ENCODE measurements at regions of chr10 and their contacts with region 1.

Region 1: DNA sequence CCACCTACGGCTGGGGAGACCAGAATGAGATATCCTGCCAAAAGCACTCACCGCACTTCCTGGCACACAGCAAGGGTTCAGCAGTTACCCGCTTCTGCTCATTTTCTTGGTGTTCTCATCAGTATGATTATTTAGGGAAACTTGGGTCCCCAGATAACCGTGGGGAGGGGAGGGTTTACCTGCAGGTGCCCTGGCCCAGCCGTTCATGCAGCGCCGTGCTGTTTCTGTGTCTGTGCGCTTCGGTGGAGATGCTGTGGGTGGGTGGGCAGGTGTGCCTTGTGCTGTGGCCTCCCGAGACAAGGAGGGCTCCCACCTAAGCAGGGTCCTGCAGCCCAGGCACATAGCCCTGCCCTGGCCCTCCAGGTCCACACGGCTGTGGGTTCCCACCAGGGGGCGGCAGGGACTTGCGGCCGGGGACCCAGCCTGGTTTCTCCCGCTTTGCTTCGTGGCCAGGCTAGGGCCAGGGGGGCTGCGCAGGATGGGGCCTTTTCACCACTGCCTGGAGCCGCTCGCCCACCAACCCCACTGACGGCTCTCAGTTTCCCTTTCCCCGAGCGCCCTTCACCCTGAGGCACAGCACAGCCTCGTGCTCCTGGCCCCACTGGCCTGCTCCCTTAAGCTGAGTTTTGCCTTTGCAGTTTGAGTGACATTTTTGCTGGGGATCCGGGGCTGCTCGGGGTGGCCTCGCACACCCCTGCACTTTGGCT is 78.5 kb downstream of the LHPP start:
- DNase-seq: peak; percentile 71
- ATAC-seq: peak; percentile 66
- H3K4me3 Mint-ChIP-seq: peak overlapping the region; percentile 50
- H3K27ac Mint-ChIP-seq: peak overlapping the region; percentile 82
- H3K4me1 Mint-ChIP-seq: peaks cover 89% of the 10 kb centered on the region
- H3K27me3 Mint-ChIP-seq: no peaks in the 10 kb centered on the region
- CTCF ChIP-seq: no peak

Region 2: DNA sequence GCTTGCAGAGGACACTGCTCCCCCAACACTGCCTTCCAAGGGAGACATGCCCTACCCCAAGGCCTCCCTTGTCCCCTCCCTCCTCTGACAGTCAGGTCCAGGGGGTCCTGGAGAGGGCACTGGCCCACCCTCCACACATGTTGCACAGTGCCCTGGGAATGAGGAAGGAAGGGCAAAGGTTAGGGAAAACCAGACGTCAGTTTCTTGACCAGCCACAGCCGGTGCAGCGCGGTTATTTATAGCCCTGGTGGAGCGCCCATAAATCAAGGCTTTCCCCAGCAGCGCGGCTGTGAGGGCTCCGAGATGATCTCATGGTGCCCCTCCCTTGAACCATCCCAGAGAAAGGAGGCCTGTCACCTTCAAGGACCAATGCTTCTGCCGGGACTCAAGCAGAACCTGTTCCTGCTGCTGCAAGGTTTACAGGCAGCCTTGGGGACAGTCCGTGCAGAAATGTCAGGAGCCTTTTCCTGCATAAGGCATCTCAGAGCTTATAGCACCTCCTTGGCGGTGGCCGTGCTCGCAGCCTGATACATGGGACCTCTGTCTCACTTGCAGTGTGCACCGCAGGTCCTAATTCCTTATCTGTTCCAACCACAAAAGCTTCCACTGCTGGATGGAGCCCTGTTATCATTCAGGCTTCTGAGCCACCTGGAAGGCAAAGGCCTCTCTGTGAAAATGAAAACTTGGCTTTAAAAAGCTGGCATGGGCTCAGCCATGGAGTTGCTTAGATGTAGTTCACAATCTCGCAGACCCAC is 48.8 kb after region 1 on chr10:
- CTCF ChIA-PET with region 1: no interaction called
- POLR2A ChIA-PET with region 1: interaction called, 7 read pairs
- intact Hi-C with region 1: loop called (anchors 2 kb)
- DNase-seq: no peak
- ATAC-seq: no peak
- H3K4me3 Mint-ChIP-seq: no peak overlapping the region
- H3K27ac Mint-ChIP-seq: no peak overlapping the region
- H3K4me1 Mint-ChIP-seq: peaks cover 57% of the 10 kb centered on the region
- H3K27me3 Mint-ChIP-seq: no peaks in the 10 kb centered on the region
- CTCF ChIP-seq: no peak

Region 3: DNA sequence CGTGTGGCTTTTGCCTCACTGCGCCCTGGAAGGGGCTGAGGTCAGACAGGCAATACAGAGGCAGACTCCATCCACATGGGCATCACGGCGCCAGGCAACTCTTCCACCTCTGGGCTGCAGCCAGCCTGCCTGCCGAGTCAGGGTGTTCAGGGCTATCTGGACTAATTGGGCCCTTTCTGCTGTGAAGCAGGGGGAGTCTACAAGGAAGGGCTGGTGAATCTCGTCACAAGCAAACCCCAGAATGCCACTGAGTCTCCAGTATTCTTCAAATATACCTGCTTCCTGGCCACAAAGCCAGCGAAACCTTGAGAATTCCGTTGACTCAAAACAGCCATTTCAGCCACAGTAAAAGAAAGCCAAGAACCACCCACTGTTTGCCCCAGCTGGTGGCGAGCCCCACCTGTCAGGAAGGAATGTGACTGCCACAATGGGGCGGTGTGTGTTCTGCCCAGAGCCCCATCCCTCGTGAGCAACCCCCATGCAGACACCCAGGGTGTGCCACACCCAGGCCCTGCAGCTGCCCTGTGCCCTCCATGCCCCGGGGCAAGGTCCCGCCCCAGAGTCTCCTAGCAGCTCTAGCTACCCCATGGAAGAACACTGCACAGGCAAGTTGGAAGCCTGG is 86.8 kb after region 1 on chr10:
- CTCF ChIA-PET with region 1: interaction called, 8 read pairs
- POLR2A ChIA-PET with region 1: interaction called, 43 read pairs
- intact Hi-C with region 1: loop called (anchors 1 kb)
- DNase-seq: no peak
- ATAC-seq: peak; percentile 63
- H3K4me3 Mint-ChIP-seq: peak overlapping the region; percentile 46
- H3K27ac Mint-ChIP-seq: peak overlapping the region; percentile 95
- H3K4me1 Mint-ChIP-seq: peaks cover 99% of the 10 kb centered on the region
- H3K27me3 Mint-ChIP-seq: no peaks in the 10 kb centered on the region
- CTCF ChIP-seq: no peak

Region 4: GRCh38 chr10:124647421-124648130 is 107.5 kb after region 1 on chr10:
- CTCF ChIA-PET with region 1: interaction called, 8 read pairs
- POLR2A ChIA-PET with region 1: interaction called, 11 read pairs
- intact Hi-C with region 1: no loop called
- DNase-seq: no peak
- ATAC-seq: peak; percentile 64
- H3K4me3 Mint-ChIP-seq: peak overlapping the region; percentile 62
- H3K27ac Mint-ChIP-seq: peak overlapping the region; percentile 88
- H3K4me1 Mint-ChIP-seq: peaks cover 100% of the 10 kb centered on the region
- H3K27me3 Mint-ChIP-seq: no peaks in the 10 kb centered on the region
- CTCF ChIP-seq: no peak

Region 5: GRCh38 chr10:124732931-124733570 is 193.0 kb after region 1 on chr10:
- CTCF ChIA-PET with region 1: interaction called, 7 read pairs
- POLR2A ChIA-PET with region 1: interaction called, 10 read pairs
- intact Hi-C with region 1: no loop called
- DNase-seq: no peak
- ATAC-seq: peak; percentile 43
- H3K4me3 Mint-ChIP-seq: peak overlapping the region; percentile 58
- H3K27ac Mint-ChIP-seq: peak overlapping the region; percentile 82
- H3K4me1 Mint-ChIP-seq: peaks cover 100% of the 10 kb centered on the region
- H3K27me3 Mint-ChIP-seq: no peaks in the 10 kb centered on the region
- CTCF ChIP-seq: no peak